Head of caudate nucleus (tissue), 42 donors: ENCODE measurements at regions of chr17 and their contacts with region 1.

Region 1: GRCh38 chr17:42405963-42406495 is 17.0 kb downstream of the CAVIN1 start:
- DNase-seq: peak; percentile 60 to 95 (median 87)

Region 2: DNA sequence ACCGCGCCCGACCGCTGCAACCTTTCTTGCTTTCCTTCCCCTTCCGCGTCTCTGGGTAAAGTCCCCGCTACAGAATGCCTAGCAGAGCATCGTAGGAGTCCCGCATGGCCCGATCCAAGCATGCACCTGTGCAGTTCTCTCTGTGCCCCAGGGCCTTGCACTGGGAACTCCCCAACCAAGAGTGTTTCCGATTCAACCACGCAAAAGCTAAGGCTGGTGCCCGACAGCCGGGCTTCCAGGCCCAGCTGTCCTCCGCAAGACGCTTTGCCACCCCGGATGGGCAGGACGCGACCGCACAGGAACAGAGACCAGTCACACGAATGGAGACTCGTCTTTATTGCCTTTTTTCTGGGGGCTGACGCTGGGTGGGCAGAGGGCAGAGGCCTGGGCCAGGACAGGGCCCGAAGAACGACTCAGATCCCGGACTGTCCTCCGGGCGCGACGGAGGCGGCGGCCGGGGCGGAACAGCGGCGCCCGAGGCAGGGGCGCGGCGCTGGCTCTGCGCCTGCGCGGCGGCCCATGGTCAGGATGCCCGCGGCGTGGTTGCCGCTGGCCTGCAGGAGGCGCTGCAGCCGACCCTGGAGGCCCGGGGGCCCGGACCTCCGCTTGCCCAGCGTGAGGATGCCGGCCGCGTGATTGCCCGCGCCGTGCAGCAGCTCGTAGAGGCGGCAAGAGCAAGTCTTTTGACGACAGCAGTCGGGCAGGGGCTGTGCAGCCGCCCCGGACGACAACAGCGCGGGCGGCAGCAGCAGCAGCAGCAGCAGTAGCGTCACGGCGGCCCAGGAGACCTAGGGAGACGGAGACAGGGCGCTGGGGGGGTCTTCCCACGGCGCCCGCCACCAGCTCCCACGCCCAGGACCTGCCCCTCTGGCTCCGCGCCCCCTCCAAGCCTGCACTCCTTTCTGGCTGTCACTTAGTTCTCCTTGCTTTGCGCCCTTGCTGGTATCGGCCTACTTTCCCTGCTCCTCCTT is 222.0 kb before region 1 on chr17:
- intact Hi-C with region 1: loop called (anchors 10 kb)
- DNase-seq: peak in 41 of 42 donors; percentile 31 to 88 (median 75)

Region 3: DNA sequence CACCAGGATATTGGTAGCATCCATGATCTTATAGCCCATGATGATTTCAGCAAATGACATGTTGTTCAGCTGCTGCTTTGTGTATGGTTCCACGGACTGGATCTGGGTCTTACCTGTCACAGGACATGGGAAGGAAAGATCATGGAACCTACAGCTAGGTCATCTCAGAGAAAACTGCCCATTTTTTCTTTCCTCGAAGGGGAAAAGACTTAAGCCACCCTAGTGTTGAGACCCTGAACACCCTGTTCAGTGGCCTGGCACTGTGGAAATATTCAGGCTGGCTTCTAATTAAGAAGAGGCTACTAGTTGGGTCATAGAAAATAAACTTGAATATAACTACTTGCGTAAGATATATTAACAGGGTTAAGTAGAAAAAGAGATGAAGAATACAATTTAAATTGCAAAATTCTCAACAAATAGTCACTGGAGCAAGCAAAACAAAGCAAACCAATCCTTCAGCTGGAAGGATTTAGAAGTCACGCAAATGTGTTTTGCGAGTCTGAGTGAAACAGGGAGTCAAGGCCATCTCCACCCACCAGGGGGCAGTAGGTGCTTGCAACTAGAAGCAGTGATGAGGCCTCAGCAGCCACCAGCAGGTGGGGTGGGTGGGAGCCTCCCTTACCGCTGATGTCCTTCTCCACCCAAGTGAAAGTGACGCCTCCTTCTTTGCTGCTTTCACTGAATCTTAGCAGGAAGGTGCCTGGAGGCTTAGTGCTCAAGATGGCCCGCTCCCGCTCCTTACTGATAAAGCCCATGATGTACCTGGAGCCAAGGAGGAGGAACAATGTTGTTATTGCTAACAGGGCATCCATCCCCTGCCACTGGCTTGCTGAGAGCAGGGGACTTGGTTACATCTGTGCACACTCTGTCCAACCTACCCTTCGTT is 83.4 kb before region 1 on chr17:
- intact Hi-C with region 1: loop called (anchors 1 kb)
- DNase-seq: peak; percentile 88 to 99 (median 95)